Posterior vena cava (tissue), 2 donors: ENCODE measurements at regions of chr6 and their contacts with region 1.

Region 1: DNA sequence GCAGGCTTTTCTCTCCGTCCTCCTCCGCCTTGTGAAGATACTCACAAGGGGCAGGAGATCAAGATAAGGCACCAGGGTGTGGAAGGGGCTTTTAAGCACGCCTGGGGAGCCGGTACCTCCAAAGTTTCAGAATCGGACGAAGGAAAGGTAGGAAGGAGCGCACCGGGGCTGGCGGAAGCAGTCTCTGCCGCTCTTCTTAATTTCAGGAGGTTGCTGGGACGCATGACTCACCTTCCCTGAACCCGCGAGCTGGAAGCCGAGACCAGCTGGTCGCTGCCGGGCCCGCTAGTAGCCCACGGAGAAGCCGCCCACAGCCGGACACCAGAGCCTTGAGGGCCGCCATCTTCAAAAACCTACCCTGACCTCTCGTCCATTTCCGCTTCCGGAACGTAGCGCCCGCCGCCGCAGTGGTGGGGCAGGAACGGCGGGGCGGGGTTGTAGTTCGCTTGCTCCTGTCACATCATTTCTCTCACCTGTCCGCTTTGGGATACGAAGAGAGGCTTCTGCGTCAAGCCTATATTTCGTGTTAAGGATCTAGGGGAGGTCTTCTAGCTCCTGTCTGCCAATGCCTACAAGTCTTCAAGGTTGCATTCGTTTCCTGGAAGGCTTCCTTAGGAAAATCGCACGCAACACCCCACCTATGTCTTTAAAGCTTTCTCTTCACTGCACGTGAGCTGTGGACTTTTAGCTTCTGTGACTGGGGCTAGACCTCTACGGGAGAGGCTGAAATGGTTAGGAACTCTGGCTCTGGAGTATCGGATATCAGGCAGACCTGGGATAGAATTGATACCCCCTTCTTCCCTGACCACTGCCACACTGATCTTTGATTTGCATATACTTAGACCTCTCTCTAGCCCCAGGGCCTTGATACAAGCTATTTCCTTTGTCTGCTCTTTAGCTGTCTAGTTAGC is at the start of gene MRPS18A:
- DNase-seq: peak; percentile 93
- total RNA-seq, gene MRPS18A: 25.4 to 28.2 TPM

Region 2: DNA sequence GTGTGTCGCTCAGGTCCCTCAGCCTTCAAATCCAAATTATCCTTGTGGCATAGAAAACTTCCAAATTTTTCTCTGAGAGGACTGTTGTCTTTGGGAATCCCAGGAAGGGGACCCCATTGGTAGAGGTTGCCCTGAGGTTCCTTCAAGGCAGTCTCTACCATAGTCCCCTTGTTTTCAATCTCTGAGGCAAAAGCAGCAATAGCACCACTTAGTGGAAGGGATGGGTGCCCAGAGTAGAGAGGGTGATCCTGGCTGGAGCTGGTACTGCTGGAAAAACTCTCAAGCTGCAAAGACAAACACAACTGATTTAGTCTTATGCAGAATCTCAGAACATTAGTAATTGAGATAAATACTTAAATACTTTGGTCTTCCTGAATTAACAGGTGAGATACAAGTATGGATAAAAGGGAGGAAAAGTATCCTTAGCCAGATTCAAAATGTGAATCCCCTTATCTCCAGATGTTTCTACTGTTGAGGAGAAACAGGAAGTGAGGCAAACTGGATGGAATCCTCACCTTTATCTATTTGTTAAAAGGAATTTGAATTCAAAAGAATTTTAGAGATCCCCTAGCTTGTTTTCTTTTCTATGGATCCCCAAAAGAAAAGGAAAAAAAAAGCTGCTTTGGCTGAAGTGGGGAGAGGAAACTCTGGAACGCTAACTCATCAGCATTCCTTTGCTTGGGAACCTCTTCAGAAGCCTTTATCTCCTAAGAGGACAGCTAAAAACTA is 331.7 kb before region 1 on chr6:
- intact Hi-C with region 1: no loop called
- DNase-seq: no peak

Region 3: GRCh38 chr6:43673444-43674084 is 14.1 kb before region 1 on chr6:
- intact Hi-C with region 1: loop called in 1 of 2 experiments (anchors 2 kb)
- DNase-seq: peak; percentile 69

Region 4: DNA sequence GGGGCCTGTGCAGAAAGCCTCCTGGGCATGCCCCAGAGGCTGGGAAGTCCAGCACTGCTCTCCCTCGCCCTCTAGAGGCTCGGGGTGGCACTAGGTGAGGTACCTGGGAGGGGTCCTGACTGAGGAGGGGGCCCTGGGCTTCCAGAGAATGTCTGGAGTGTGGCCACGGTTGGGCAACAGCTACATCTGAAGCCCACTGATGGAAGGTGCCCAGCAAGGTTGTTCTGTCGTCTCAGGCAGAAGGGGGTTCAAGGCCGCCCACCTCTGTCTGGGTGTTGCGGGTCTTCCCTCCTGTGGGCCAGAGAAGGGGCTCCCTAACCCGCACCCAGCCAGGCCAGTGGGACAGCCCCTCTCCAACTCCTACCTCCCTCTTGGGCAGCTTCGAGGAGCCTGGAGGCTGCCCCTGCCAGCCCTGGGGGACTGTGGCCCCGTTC is 70.9 kb after region 1 on chr6:
- intact Hi-C with region 1: no loop called
- DNase-seq: peak; percentile 83